Activated CD4-positive, alpha-beta T cell treated with anti-CD3 and anti-CD28 coated beads, Interleukin-2, amount 10 ng/mL, durations not matched to agents 24 days and 14 days (primary cell): ENCODE measurements at regions of chr1 and their contacts with region 1.

Region 1: GRCh38 chr1:169586395-169587255 is at the start of gene F5:
- DNase-seq: peak; percentile 92
- H3K4me3 Mint-ChIP-seq: peak within 1 kb of the TSS; percentile 95
- H3K27ac Mint-ChIP-seq: peak within 1 kb of the TSS; percentile 92
- H3K4me1 Mint-ChIP-seq: peaks cover 62% of the 10 kb centered on the region
- H3K27me3 Mint-ChIP-seq: no peaks in the 10 kb centered on the region
- total RNA-seq, gene F5: 46.3 and 51.3 TPM in 2 replicates

Region 2: GRCh38 chr1:169546087-169546995 is 40.3 kb before region 1 on chr1:
- intact Hi-C with region 1: loop called (anchors 5 kb)
- DNase-seq: peak; percentile 90
- H3K4me3 Mint-ChIP-seq: no peak overlapping the region
- H3K27ac Mint-ChIP-seq: no peak overlapping the region
- H3K4me1 Mint-ChIP-seq: peaks cover 19% of the 10 kb centered on the region
- H3K27me3 Mint-ChIP-seq: no peaks in the 10 kb centered on the region

Region 3: GRCh38 chr1:169680377-169681019 is 93.9 kb after region 1 on chr1:
- intact Hi-C with region 1: loop called (anchors 1 kb)
- DNase-seq: no peak
- H3K4me3 Mint-ChIP-seq: peak overlapping the region; percentile 52
- H3K27ac Mint-ChIP-seq: peak overlapping the region; percentile 81
- H3K4me1 Mint-ChIP-seq: peaks cover 48% of the 10 kb centered on the region
- H3K27me3 Mint-ChIP-seq: no peaks in the 10 kb centered on the region

Region 4: GRCh38 chr1:169794530-169795416 is 208.1 kb after region 1 on chr1 and contains the start of gene METTL18:
- intact Hi-C with region 1: loop called (anchors 2 kb)
- DNase-seq: peak; percentile 98
- H3K4me3 Mint-ChIP-seq: peak within 1 kb of the TSS; percentile 99
- H3K27ac Mint-ChIP-seq: peak within 1 kb of the TSS; percentile 97
- H3K4me1 Mint-ChIP-seq: peaks cover 45% of the 10 kb centered on the region
- H3K27me3 Mint-ChIP-seq: no peaks in the 10 kb centered on the region
- total RNA-seq, gene METTL18: 9.3 and 10.3 TPM in 2 replicates